ENCODE measurements at regions of chr6 and their contacts with region 1.

Region 1: GRCh38 chr6:71510057-71510713 is 221.6 kb downstream of the OGFRL1 start:
- DNase-seq: peak; percentile 80
- H3K4me3 Mint-ChIP-seq: no peak overlapping the region
- H3K27ac Mint-ChIP-seq: no peak overlapping the region
- H3K4me1 Mint-ChIP-seq: peaks cover 27% of the 10 kb centered on the region
- H3K27me3 Mint-ChIP-seq: no peaks in the 10 kb centered on the region
- CTCF ChIP-seq: peak; percentile 75

Region 2: GRCh38 chr6:71190809-71191208 is 319.4 kb before region 1 on chr6:
- CTCF ChIA-PET with region 1: interaction called, 3 read pairs
- intact Hi-C with region 1: loop called (anchors 2 kb)
- DNase-seq: no peak
- H3K4me3 Mint-ChIP-seq: no peak overlapping the region
- H3K27ac Mint-ChIP-seq: no peak overlapping the region
- H3K4me1 Mint-ChIP-seq: no peaks in the 10 kb centered on the region
- H3K27me3 Mint-ChIP-seq: no peaks in the 10 kb centered on the region
- CTCF ChIP-seq: peak; percentile 29

Region 3: DNA sequence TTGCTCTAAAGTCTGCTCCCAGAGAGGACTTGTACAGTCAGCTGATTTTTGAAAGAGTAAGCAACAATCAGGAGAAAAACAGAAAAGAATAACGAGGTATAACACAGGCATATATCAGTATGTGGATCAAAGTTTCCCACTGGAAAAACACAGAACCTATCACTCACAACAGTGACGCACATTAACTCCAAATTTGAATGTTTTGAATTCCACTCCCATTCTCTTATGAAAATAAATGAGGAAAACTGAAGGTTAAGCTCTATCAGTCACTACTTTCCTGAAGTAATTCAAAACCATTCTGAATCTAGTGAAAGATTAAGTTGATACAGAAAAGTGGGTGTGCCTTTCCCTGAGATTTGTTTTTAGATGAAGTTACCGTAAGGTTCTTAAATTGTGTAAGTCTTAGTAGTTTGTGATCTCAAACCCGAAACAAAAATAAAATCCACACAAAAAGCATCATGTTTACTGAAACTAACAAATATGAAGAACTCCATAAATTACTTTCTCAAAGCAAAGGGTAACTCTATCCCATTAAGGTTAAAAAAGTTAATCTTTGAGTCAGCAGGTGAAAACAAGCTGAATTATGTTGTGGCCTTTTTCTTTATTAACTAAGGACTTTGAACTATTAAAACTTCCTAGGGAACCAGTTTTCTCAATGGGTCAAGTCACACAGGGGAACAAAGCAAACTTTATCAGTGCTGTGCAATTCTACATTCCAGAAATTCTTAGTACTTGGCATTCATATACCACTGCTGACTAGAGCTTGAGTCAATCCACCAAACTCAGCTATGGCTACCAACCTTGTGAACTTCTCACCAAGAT is 105.8 kb before region 1 on chr6:
- CTCF ChIA-PET with region 1: interaction called, 4 read pairs
- intact Hi-C with region 1: loop called (anchors 5 kb)
- DNase-seq: peak; percentile 51
- H3K4me3 Mint-ChIP-seq: peak overlapping the region; percentile 76
- H3K27ac Mint-ChIP-seq: peak overlapping the region; percentile 87
- H3K4me1 Mint-ChIP-seq: peaks cover 41% of the 10 kb centered on the region
- H3K27me3 Mint-ChIP-seq: no peaks in the 10 kb centered on the region
- CTCF ChIP-seq: no peak

Region 4: GRCh38 chr6:71444222-71444621 is 66.0 kb before region 1 on chr6:
- CTCF ChIA-PET with region 1: interaction called, 3 read pairs
- intact Hi-C with region 1: loop called (anchors 5 kb)
- DNase-seq: no peak
- H3K4me3 Mint-ChIP-seq: peak overlapping the region; percentile 18
- H3K27ac Mint-ChIP-seq: no peak overlapping the region
- H3K4me1 Mint-ChIP-seq: no peaks in the 10 kb centered on the region
- H3K27me3 Mint-ChIP-seq: no peaks in the 10 kb centered on the region
- CTCF ChIP-seq: peak; percentile 18

Region 5: GRCh38 chr6:71478834-71479541 is 31.2 kb before region 1 on chr6:
- CTCF ChIA-PET with region 1: no interaction called
- intact Hi-C with region 1: loop called (anchors 1 kb)
- DNase-seq: no peak
- H3K4me3 Mint-ChIP-seq: peak overlapping the region; percentile 13
- H3K27ac Mint-ChIP-seq: peak overlapping the region; percentile 45
- H3K4me1 Mint-ChIP-seq: peaks cover 46% of the 10 kb centered on the region
- H3K27me3 Mint-ChIP-seq: no peaks in the 10 kb centered on the region
- CTCF ChIP-seq: no peak

Measured in Calu3 (cell line).